ENCODE measurements at regions of chr13 and their contacts with region 1.

Region 1: GRCh38 chr13:29508130-29508875 is 87.2 kb downstream of the SLC7A1 start:
- DNase-seq: peak; percentile 85
- CTCF ChIP-seq: peak; percentile 99

Region 2: DNA sequence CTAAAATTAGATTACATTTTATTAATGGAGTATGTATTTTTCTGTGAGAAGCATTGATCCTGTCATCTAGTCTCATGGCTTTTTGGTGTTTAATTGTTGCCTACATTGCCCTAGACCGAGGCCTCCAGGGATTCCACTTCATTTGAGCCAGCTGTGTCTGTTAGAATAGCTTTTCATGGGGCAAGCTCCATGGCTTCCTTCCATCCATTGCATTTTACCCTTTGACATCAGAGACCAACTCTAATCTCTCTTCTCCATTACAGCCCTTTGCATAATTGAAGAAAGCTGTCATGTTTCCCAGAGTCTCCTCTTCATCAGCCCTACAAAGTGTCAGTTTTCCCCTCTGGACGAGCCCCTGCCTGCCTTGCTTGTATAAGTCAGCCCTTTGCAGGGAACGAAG is 617.6 kb before region 1 on chr13:
- CTCF ChIA-PET with region 1: no interaction called
- POLR2A ChIA-PET with region 1: no interaction called
- DNase-seq: no peak
- CTCF ChIP-seq: no peak

Region 3: GRCh38 chr13:28981530-28981929 is 526.8 kb before region 1 on chr13:
- CTCF ChIA-PET with region 1: no interaction called
- POLR2A ChIA-PET with region 1: no interaction called
- DNase-seq: no peak
- CTCF ChIP-seq: no peak

Region 4: DNA sequence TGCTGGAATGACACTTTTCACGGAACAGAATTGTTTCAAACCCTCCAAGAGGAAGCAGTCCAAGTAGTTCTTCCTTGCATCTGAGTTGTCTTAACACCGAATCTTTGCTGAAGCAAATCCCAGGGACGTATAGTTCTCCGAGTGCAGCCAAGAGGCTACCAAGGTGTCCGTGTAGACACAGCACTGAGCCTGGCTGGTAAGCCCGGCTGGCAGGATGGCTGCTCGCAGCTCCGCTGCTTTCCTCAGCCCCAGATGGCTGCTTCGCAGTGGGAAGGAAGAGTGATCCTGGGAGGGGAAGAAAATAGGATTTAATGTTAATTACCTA is 17.8 kb before region 1 on chr13:
- CTCF ChIA-PET with region 1: interaction called, 51 read pairs
- POLR2A ChIA-PET with region 1: no interaction called
- DNase-seq: no peak
- CTCF ChIP-seq: no peak

Region 5: GRCh38 chr13:29522044-29522685 is 13.9 kb after region 1 on chr13:
- CTCF ChIA-PET with region 1: interaction called, 36 read pairs
- POLR2A ChIA-PET with region 1: no interaction called
- DNase-seq: no peak
- CTCF ChIP-seq: no peak

Region 6: GRCh38 chr13:29564818-29565217 is 56.5 kb after region 1 on chr13:
- CTCF ChIA-PET with region 1: interaction called, 10 read pairs
- POLR2A ChIA-PET with region 1: no interaction called
- DNase-seq: no peak
- CTCF ChIP-seq: no peak

Region 7: DNA sequence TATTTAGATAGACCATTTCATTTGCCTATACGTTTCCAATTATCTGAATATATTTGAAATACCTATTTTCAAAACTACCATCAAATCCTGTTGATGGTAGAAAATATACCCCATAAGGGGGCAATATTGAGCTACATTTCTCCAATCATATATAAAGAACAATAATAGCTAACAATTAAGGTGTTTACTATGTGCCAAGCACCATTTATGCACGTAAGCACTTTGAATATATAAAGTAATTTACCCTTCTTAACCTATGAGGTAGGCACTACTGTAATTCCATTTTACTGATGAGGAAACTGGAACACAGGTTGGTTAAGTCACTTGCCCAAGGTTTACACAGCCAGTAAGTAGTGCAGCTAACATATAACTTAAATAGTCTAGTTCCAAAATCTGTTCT is 262.9 kb after region 1 on chr13:
- CTCF ChIA-PET with region 1: interaction called, 16 read pairs
- POLR2A ChIA-PET with region 1: no interaction called
- DNase-seq: no peak
- CTCF ChIP-seq: peak; percentile 52

Region 8: DNA sequence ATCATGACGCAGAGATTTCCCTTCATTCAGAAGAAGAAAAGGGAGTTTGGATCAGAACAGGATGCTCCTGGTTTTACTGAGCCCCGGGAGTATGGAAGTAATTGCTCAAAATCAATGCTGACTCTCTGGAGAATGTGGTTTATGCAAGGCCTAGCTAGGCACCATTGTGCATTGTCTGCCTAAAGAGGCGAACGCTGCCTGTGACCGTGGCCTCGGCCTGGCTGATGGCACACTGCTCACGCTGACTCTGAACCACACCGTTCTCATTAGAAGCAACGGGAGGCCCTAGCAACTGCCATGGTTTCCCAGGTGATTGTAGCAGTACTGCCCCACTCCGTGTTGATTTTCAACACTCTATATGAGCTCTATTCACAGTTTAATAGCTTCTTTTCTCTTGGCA is 383.8 kb after region 1 on chr13:
- CTCF ChIA-PET with region 1: no interaction called
- POLR2A ChIA-PET with region 1: no interaction called
- DNase-seq: no peak
- CTCF ChIP-seq: no peak